Mammary epithelial cell (primary cell): ENCODE measurements at regions of chr19 and their contacts with region 1.

Region 1: DNA sequence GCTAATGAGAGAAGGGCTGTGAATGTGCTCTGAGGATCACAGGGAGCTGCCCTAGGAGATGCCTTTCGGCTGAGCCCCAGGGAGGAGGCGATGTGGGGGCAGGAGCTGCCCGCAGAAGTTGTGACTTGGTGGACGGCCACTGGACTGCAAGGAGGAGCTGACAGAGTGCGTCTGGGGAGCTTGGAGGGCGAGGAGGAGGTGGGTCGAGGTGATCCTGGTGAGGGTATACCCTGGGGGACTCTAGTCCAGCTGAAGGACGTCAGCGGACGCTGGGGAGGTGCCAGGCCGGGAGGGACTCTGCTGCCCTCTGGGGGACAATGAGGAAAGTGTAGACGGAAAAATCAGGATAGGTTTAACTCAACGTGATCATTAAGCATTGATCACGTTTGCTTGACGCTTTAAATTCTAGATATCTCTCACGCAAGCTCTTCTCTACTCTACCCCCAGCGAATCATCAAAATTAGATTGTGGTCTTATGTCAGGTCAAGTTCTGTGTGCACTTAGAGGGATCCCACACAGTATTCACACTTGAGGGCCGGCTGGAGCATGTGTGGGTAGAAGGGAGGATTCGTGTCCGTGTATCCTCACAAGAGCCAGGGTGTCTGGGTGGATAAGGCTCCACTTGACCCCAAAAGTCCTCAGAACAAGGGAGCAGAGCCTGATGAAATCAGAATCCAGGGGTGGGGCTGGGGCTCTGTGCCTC is 3.3 kb upstream of the CEACAM7 start:
- DNase-seq: no peak
- H3K4me3 ChIP-seq: no peak overlapping the region
- H3K27ac ChIP-seq: no peak overlapping the region
- H3K4me1 ChIP-seq: no peaks in the 10 kb centered on the region
- H3K27me3 ChIP-seq: peaks cover 5% of the 10 kb centered on the region
- CTCF ChIP-seq: peak; percentile 69 to 72

Region 2: GRCh38 chr19:41369769-41370168 is 321.6 kb before region 1 on chr19:
- CTCF ChIA-PET with region 1: interaction called, 22 read pairs
- dilution Hi-C with region 1: no loop called
- in situ Hi-C with region 1: no loop called
- intact Hi-C with region 1: no loop called
- DNase-seq: no peak
- H3K4me3 ChIP-seq: no peak overlapping the region
- H3K27ac ChIP-seq: no peak overlapping the region
- H3K4me1 ChIP-seq: peaks cover 21% of the 10 kb centered on the region
- H3K27me3 ChIP-seq: no peaks in the 10 kb centered on the region
- CTCF ChIP-seq: no peak

Region 3: GRCh38 chr19:41641879-41642485 is 49.4 kb before region 1 on chr19:
- CTCF ChIA-PET with region 1: no interaction called
- dilution Hi-C with region 1: no loop called
- in situ Hi-C with region 1: no loop called
- intact Hi-C with region 1: loop called (anchors 5 kb)
- DNase-seq: peak; percentile 30
- H3K4me3 ChIP-seq: no peak overlapping the region
- H3K27ac ChIP-seq: no peak overlapping the region
- H3K4me1 ChIP-seq: no peaks in the 10 kb centered on the region
- H3K27me3 ChIP-seq: no peaks in the 10 kb centered on the region
- CTCF ChIP-seq: peak; percentile 90 to 91

Region 4: GRCh38 chr19:41706741-41707501 is 15.5 kb after region 1 on chr19:
- CTCF ChIA-PET with region 1: no interaction called
- dilution Hi-C with region 1: no loop called
- in situ Hi-C with region 1: no loop called
- intact Hi-C with region 1: no loop called
- DNase-seq: peak; percentile 51
- H3K4me3 ChIP-seq: peak overlapping the region in 2 of 3 experiments; percentile 23 to 33
- H3K27ac ChIP-seq: no peak overlapping the region
- H3K4me1 ChIP-seq: peaks cover 4% of the 10 kb centered on the region
- H3K27me3 ChIP-seq: no peaks in the 10 kb centered on the region
- CTCF ChIP-seq: peak; percentile 71 to 78